CD8-positive, alpha-beta T cell (primary cell): ENCODE measurements at regions of chr7 and their contacts with region 1.

Region 1: DNA sequence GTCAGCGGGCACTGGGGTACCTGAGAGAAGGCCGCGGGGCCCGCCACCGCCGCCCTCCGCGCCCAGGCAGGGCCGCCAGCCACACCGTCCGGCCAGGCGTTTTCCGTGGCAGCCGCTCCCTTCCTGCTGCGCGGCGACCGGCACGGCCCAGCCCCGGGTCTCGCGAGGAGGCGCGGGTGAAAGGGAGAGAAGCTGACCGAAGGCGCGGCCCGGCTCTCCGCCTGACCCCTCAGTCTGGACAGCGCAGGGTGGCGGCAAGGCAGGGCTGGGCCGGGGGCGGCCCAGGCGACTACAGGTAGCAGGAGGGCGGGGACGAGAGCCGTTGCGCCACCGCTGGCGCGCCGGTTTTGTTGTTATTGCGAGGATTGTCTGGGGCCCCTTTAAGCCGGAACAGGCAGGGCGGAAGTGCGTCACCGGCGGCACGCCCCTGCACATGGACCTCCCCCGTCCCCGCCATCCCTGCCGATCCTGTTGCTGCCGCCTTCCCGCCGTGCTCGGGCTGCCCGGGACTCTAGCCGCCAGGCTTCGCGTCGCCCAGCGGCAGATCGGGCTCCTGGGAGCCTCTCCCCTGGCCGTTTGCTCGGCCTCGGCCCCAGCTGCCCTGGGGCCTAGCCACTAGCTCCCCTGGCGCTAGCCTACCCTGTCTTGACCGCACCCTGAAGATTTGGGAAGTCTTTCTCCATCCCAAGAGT is at the start of gene HERPUD2:
- DNase-seq: peak; percentile 85 to 96 (median 93)
- ATAC-seq: peak; percentile 80
- H3K4me3 ChIP-seq: peak within 1 kb of the TSS; percentile 93 to 100
- H3K4me3 Mint-ChIP-seq: peak within 1 kb of the TSS; percentile 87
- H3K27ac ChIP-seq: peak within 1 kb of the TSS; percentile 97 to 100
- H3K27ac Mint-ChIP-seq: peak within 1 kb of the TSS; percentile 100
- H3K4me1 ChIP-seq: peaks cover 33% of the 10 kb centered on the region
- H3K4me1 Mint-ChIP-seq: peaks cover 59% of the 10 kb centered on the region
- H3K27me3 ChIP-seq: no peaks in the 10 kb centered on the region
- H3K27me3 Mint-ChIP-seq: no peaks in the 10 kb centered on the region
- CTCF ChIP-seq: no peak
- total RNA-seq, gene HERPUD2: 123 to 134 TPM

Region 2: GRCh38 chr7:35037526-35038339 is 657.2 kb before region 1 on chr7:
- CTCF ChIA-PET with region 1: no interaction called
- POLR2A ChIA-PET with region 1: no interaction called
- intact Hi-C with region 1: loop called in 1 of 2 experiments (anchors 2 kb)
- DNase-seq: peak; percentile 76 to 96 (median 90)
- ATAC-seq: peak; percentile 71
- H3K4me3 ChIP-seq: peak overlapping the region; percentile 44 to 66
- H3K4me3 Mint-ChIP-seq: peak overlapping the region; percentile 89
- H3K27ac ChIP-seq: peak overlapping the region; percentile 26 to 49
- H3K27ac Mint-ChIP-seq: peak overlapping the region; percentile 80
- H3K4me1 ChIP-seq: peaks cover 25% of the 10 kb centered on the region
- H3K4me1 Mint-ChIP-seq: peaks cover 32% of the 10 kb centered on the region
- H3K27me3 ChIP-seq: no peaks in the 10 kb centered on the region
- H3K27me3 Mint-ChIP-seq: no peaks in the 10 kb centered on the region
- CTCF ChIP-seq: peak; percentile 74

Region 3: GRCh38 chr7:35261476-35262285 is 433.2 kb before region 1 on chr7:
- CTCF ChIA-PET with region 1: no interaction called
- POLR2A ChIA-PET with region 1: no interaction called
- intact Hi-C with region 1: no loop called
- DNase-seq: no peak
- ATAC-seq: no peak
- H3K4me3 ChIP-seq: no peak overlapping the region
- H3K4me3 Mint-ChIP-seq: no peak overlapping the region
- H3K27ac ChIP-seq: no peak overlapping the region
- H3K27ac Mint-ChIP-seq: no peak overlapping the region
- H3K4me1 ChIP-seq: no peaks in the 10 kb centered on the region
- H3K4me1 Mint-ChIP-seq: peaks cover 3% of the 10 kb centered on the region
- H3K27me3 ChIP-seq: peaks cover 12 to 36% of the 10 kb centered on the region in 2 experiments
- H3K27me3 Mint-ChIP-seq: peaks cover 71% of the 10 kb centered on the region
- CTCF ChIP-seq: no peak

Region 4: DNA sequence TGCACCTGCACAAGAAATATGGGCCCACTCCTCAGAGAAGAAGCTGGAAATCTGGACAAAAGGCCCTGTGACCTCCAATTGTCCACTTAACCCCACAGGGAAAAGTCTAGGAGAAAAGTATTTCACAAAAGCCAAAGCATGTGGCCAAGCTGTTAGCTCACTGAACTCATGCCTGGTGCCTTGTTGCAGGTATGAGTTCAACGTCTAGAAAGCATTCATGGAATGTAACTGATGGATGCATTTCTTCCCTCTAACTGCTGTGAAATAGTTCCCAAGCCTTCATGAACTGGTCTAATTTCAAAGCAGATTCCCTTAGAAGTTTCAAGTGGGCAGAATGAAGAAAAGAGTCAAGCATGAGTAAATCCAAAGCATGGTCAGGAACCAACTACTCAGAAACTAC is 116.4 kb before region 1 on chr7:
- CTCF ChIA-PET with region 1: no interaction called
- POLR2A ChIA-PET with region 1: no interaction called
- intact Hi-C with region 1: no loop called
- DNase-seq: no peak
- ATAC-seq: no peak
- H3K4me3 ChIP-seq: no peak overlapping the region
- H3K4me3 Mint-ChIP-seq: no peak overlapping the region
- H3K27ac ChIP-seq: no peak overlapping the region
- H3K27ac Mint-ChIP-seq: no peak overlapping the region
- H3K4me1 ChIP-seq: no peaks in the 10 kb centered on the region
- H3K4me1 Mint-ChIP-seq: no peaks in the 10 kb centered on the region
- H3K27me3 ChIP-seq: no peaks in the 10 kb centered on the region
- H3K27me3 Mint-ChIP-seq: no peaks in the 10 kb centered on the region
- CTCF ChIP-seq: no peak

Region 5: GRCh38 chr7:35681231-35682029 is 13.5 kb before region 1 on chr7:
- CTCF ChIA-PET with region 1: no interaction called
- POLR2A ChIA-PET with region 1: no interaction called
- intact Hi-C with region 1: no loop called
- DNase-seq: no peak
- ATAC-seq: peak; percentile 25
- H3K4me3 ChIP-seq: no peak overlapping the region
- H3K4me3 Mint-ChIP-seq: no peak overlapping the region
- H3K27ac ChIP-seq: no peak overlapping the region
- H3K27ac Mint-ChIP-seq: no peak overlapping the region
- H3K4me1 ChIP-seq: peaks cover 47% of the 10 kb centered on the region
- H3K4me1 Mint-ChIP-seq: peaks cover 71% of the 10 kb centered on the region
- H3K27me3 ChIP-seq: no peaks in the 10 kb centered on the region
- H3K27me3 Mint-ChIP-seq: no peaks in the 10 kb centered on the region
- CTCF ChIP-seq: no peak

Region 6: GRCh38 chr7:35707422-35707821 is 12.5 kb after region 1 on chr7:
- CTCF ChIA-PET with region 1: interaction called, 31 read pairs
- POLR2A ChIA-PET with region 1: interaction called, 11 read pairs
- intact Hi-C with region 1: loop called in 1 of 2 experiments (anchors 2 kb)
- DNase-seq: no peak
- ATAC-seq: no peak
- H3K4me3 ChIP-seq: no peak overlapping the region
- H3K4me3 Mint-ChIP-seq: no peak overlapping the region
- H3K27ac ChIP-seq: no peak overlapping the region
- H3K27ac Mint-ChIP-seq: no peak overlapping the region
- H3K4me1 ChIP-seq: peaks cover 13% of the 10 kb centered on the region
- H3K4me1 Mint-ChIP-seq: peaks cover 23% of the 10 kb centered on the region
- H3K27me3 ChIP-seq: no peaks in the 10 kb centered on the region
- H3K27me3 Mint-ChIP-seq: no peaks in the 10 kb centered on the region
- CTCF ChIP-seq: no peak

Region 7: GRCh38 chr7:35729061-35729783 is 34.3 kb after region 1 on chr7:
- CTCF ChIA-PET with region 1: interaction called, 7 read pairs
- POLR2A ChIA-PET with region 1: interaction called, 29 read pairs
- intact Hi-C with region 1: loop called (anchors 1 to 2 kb)
- DNase-seq: peak in 7 of 9 experiments; percentile 26 to 91 (median 52)
- ATAC-seq: peak; percentile 65
- H3K4me3 ChIP-seq: peak overlapping the region in 1 of 2 experiments; percentile 18
- H3K4me3 Mint-ChIP-seq: peak overlapping the region; percentile 26
- H3K27ac ChIP-seq: peak overlapping the region; percentile 22 to 77
- H3K27ac Mint-ChIP-seq: peak overlapping the region; percentile 78
- H3K4me1 ChIP-seq: peaks cover 56% of the 10 kb centered on the region
- H3K4me1 Mint-ChIP-seq: peaks cover 61% of the 10 kb centered on the region
- H3K27me3 ChIP-seq: no peaks in the 10 kb centered on the region
- H3K27me3 Mint-ChIP-seq: no peaks in the 10 kb centered on the region
- CTCF ChIP-seq: no peak

Region 8: GRCh38 chr7:36291387-36292316 is 596.7 kb after region 1 on chr7:
- CTCF ChIA-PET with region 1: no interaction called
- POLR2A ChIA-PET with region 1: interaction called, 5 read pairs
- intact Hi-C with region 1: loop called in 1 of 2 experiments (anchors 5 kb)
- DNase-seq: peak; percentile 41 to 88 (median 78)
- ATAC-seq: peak; percentile 54
- H3K4me3 ChIP-seq: peak overlapping the region; percentile 18 to 27
- H3K4me3 Mint-ChIP-seq: peak overlapping the region; percentile 54
- H3K27ac ChIP-seq: no peak overlapping the region
- H3K27ac Mint-ChIP-seq: no peak overlapping the region
- H3K4me1 ChIP-seq: peaks cover 25% of the 10 kb centered on the region
- H3K4me1 Mint-ChIP-seq: peaks cover 34% of the 10 kb centered on the region
- H3K27me3 ChIP-seq: no peaks in the 10 kb centered on the region
- H3K27me3 Mint-ChIP-seq: no peaks in the 10 kb centered on the region
- CTCF ChIP-seq: peak; percentile 93

Region 9: GRCh38 chr7:36389371-36390198 is 694.7 kb after region 1 on chr7 and contains the start of gene ANLN:
- CTCF ChIA-PET with region 1: no interaction called
- POLR2A ChIA-PET with region 1: no interaction called
- intact Hi-C with region 1: loop called in 1 of 2 experiments (anchors 10 kb)
- DNase-seq: peak; percentile 67 to 93 (median 81)
- ATAC-seq: peak; percentile 94
- H3K4me3 ChIP-seq: peak within 1 kb of the TSS; percentile 76 to 80
- H3K4me3 Mint-ChIP-seq: peak within 1 kb of the TSS; percentile 84
- H3K27ac ChIP-seq: peak within 1 kb of the TSS in 1 of 2 experiments; percentile 74
- H3K27ac Mint-ChIP-seq: peak within 1 kb of the TSS; percentile 56
- H3K4me1 ChIP-seq: peaks cover 9% of the 10 kb centered on the region
- H3K4me1 Mint-ChIP-seq: peaks cover 20% of the 10 kb centered on the region
- H3K27me3 ChIP-seq: no peaks in the 10 kb centered on the region
- H3K27me3 Mint-ChIP-seq: no peaks in the 10 kb centered on the region
- CTCF ChIP-seq: no peak
- total RNA-seq, gene ANLN: 0.65 to 1.0 TPM